A549 (cell line): ENCODE measurements at regions of chr15 and their contacts with region 1.

Region 1: DNA sequence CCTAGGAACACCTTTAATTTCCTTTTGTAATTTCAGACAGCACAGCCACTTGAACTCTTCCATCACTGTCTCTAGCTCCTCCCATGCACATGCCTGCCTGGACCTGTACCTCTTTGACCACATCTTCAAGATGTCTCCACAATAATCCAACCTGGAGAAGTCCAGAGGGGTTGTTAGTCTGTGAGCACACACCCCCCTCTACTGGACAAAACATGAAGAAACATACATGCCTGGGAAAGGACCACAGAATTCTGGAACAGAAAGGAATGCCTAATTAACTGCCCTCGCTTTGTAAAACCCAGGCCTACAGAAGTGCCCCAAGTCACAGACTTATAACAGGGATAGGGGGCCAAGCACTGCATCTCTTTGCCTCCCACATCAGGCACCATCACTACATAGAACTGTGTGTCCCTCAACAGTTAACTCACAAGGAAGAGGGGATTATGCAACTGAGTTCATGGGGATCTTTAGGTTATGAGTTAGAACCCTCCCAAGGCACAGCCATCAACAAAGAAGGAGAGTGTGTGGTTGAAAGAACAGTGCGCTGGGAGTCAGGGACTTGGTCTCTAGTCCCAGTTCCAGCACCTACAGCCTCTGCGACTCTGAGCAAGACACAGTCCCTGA is 61.7 kb downstream of the FMN1 start:
- DNase-seq: peak; percentile 65 to 74
- ATAC-seq: peak; percentile 94 to 98
- H3K4me3 ChIP-seq: no peak overlapping the region
- H3K27ac ChIP-seq: no peak overlapping the region
- H3K4me1 ChIP-seq: no peaks in the 10 kb centered on the region; the same call in 2 of the 3 replicates
- CTCF ChIP-seq: peak; percentile 91
- EP300 ChIP-seq: no peak
- POLR2A ChIP-seq: no peak
- RAD21 ChIP-seq: peak; percentile 92 to 95

Region 2: GRCh38 chr15:32994810-32995424 is 137.9 kb before region 1 on chr15:
- CTCF ChIA-PET with region 1: interaction called, 21 read pairs
- POLR2A ChIA-PET with region 1: no interaction called
- DNase-seq: peak; percentile 13 to 62
- ATAC-seq: peak; percentile 52 to 82; a peak in 3 of 6 replicates
- H3K4me3 ChIP-seq: no peak overlapping the region
- H3K27ac ChIP-seq: peak overlapping the region in 1 of 2 experiments; percentile 38; a peak in 3 of 6 replicates
- H3K4me1 ChIP-seq: no peaks in the 10 kb centered on the region
- CTCF ChIP-seq: peak; percentile 95
- EP300 ChIP-seq: no peak
- POLR2A ChIP-seq: no peak
- RAD21 ChIP-seq: peak; percentile 89 to 95

Region 3: GRCh38 chr15:33021806-33022389 is 110.9 kb before region 1 on chr15:
- CTCF ChIA-PET with region 1: interaction called, 130 read pairs
- POLR2A ChIA-PET with region 1: no interaction called
- DNase-seq: peak; percentile 67 to 79
- ATAC-seq: peak; percentile 76 to 90; a peak in 4 of 6 replicates
- H3K4me3 ChIP-seq: no peak overlapping the region
- H3K27ac ChIP-seq: no peak overlapping the region
- H3K4me1 ChIP-seq: 0 out of 3 replicates have a peak, but pooled peaks cover 7% of the 10 kb centered on the region
- CTCF ChIP-seq: peak; percentile 89
- EP300 ChIP-seq: no peak
- POLR2A ChIP-seq: no peak
- RAD21 ChIP-seq: peak; percentile 77 to 78

Region 4: DNA sequence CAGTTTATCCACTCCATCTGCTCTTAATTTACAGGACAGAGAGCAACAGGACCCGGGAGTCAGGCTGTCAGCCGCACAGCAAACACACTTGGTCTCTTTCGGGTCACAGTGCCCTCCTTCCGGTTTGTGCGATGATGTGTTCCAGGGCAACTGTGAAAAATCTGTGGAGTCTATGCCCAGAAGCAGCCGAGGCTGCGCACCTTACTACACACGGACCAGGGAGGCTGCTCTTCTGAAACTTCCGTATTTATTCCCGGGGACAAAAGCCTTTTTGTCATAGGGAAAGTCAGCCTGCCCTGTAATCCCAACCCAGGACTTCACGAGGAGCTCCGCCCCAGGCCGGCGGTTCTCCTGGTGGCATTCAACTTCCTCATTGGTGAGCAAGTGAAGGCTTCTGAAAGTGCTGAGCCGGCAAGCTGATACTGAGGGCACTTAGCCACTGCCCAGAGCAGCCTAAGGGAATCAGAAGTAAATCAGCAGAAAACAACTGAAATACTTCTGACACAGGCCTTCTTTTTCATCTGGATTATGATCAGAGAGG is 64.8 kb before region 1 on chr15:
- CTCF ChIA-PET with region 1: interaction called, 20 read pairs
- POLR2A ChIA-PET with region 1: no interaction called
- DNase-seq: peak; percentile 67 to 72
- ATAC-seq: peak; percentile 77 to 88
- H3K4me3 ChIP-seq: peak overlapping the region; percentile 26; the same call in 2 of the 3 replicates
- H3K27ac ChIP-seq: peak overlapping the region; percentile 66 to 73
- H3K4me1 ChIP-seq: peaks cover 22% of the 10 kb centered on the region
- CTCF ChIP-seq: no peak
- EP300 ChIP-seq: no peak
- POLR2A ChIP-seq: no peak
- RAD21 ChIP-seq: no peak

Region 5: GRCh38 chr15:33111041-33111451 is 21.8 kb before region 1 on chr15:
- CTCF ChIA-PET with region 1: interaction called, 346 read pairs
- POLR2A ChIA-PET with region 1: no interaction called
- DNase-seq: no peak
- ATAC-seq: no peak
- H3K4me3 ChIP-seq: no peak overlapping the region
- H3K27ac ChIP-seq: no peak overlapping the region
- H3K4me1 ChIP-seq: no peaks in the 10 kb centered on the region
- CTCF ChIP-seq: no peak
- EP300 ChIP-seq: no peak
- POLR2A ChIP-seq: no peak
- RAD21 ChIP-seq: no peak

Region 6: DNA sequence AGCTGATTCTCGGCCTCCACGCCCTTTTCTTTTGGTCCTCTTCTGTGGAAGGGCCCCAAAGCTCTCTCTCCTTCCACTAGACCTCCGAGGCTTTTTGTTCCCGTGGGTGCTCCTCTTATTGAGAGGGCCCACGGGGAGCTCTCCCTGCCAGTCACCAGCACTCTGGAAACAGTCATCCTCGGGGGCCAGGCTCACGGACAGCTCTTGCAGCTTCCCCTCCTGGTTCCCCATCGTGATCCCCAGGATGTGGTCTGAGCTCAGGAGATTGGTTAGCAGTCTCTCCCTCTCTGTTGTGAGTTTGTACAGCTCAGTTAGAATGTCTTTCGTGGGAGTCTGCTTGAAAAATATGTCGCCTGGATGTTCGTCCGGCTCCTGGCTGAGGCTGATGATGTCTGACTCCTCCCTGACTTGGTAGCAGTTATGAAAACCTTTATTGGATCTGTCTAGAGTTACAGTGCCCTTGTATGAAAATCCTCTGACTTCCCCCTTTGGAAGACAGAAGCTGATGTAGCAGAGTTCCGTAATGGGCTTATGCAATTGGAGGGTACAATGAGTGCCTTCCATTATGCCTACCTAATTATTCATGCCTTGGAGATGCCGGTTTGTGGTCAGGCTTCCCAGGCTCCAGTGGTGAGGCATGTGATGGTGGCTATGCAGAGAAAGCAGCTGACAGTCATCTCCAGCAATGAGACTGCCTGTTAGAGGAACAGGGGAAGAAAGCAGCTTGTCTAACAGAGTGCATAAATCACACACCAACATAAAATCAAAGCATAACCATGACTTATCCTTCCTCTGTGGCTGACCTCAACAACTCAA is 21.7 kb after region 1 on chr15:
- CTCF ChIA-PET with region 1: interaction called, 18 read pairs
- POLR2A ChIA-PET with region 1: no interaction called
- DNase-seq: no peak
- ATAC-seq: no peak
- H3K4me3 ChIP-seq: no peak overlapping the region
- H3K27ac ChIP-seq: no peak overlapping the region
- H3K4me1 ChIP-seq: no peaks in the 10 kb centered on the region
- CTCF ChIP-seq: no peak
- EP300 ChIP-seq: no peak
- POLR2A ChIP-seq: no peak
- RAD21 ChIP-seq: no peak

Region 7: GRCh38 chr15:33168444-33168843 is 35.6 kb after region 1 on chr15:
- CTCF ChIA-PET with region 1: no interaction called
- POLR2A ChIA-PET with region 1: no interaction called
- DNase-seq: no peak
- ATAC-seq: no peak
- H3K4me3 ChIP-seq: no peak overlapping the region
- H3K27ac ChIP-seq: no peak overlapping the region
- H3K4me1 ChIP-seq: no peaks in the 10 kb centered on the region
- CTCF ChIP-seq: no peak
- EP300 ChIP-seq: no peak
- POLR2A ChIP-seq: no peak
- RAD21 ChIP-seq: no peak

Region 8: GRCh38 chr15:33226559-33227181 is 93.8 kb after region 1 on chr15:
- CTCF ChIA-PET with region 1: no interaction called
- POLR2A ChIA-PET with region 1: no interaction called
- DNase-seq: peak; percentile 85 to 86
- ATAC-seq: peak; percentile 88 to 97
- H3K4me3 ChIP-seq: no peak overlapping the region
- H3K27ac ChIP-seq: no peak overlapping the region
- H3K4me1 ChIP-seq: no peaks in the 10 kb centered on the region
- CTCF ChIP-seq: peak; percentile 57
- EP300 ChIP-seq: no peak
- POLR2A ChIP-seq: no peak
- RAD21 ChIP-seq: peak; percentile 37 to 39; a peak in 4 of 5 replicates

Region 9: DNA sequence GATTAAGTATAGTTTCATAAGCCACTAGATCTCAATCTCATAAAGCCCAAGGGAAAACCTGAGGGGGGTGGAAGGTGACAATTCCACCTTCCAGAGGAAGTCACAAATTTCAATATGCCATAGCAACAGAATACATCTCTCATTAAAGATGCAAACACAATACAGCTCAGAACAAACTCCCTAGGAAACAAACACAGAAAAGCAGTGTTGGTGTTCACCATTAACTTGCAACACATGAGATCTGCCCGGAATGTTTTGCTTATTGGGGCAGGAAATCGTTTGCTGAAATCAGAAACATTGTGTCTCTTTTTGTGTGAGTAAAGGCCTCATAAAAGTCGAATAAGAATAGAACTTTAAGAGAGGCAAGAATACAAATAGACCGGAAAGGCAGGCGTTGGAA is 172.1 kb after region 1 on chr15:
- CTCF ChIA-PET with region 1: no interaction called
- POLR2A ChIA-PET with region 1: no interaction called
- DNase-seq: no peak
- ATAC-seq: no peak
- H3K4me3 ChIP-seq: no peak overlapping the region
- H3K27ac ChIP-seq: no peak overlapping the region
- H3K4me1 ChIP-seq: no peaks in the 10 kb centered on the region
- CTCF ChIP-seq: no peak
- EP300 ChIP-seq: no peak
- POLR2A ChIP-seq: no peak
- RAD21 ChIP-seq: no peak